Activated CD8-positive, alpha-beta T cell treated with anti-CD3 and anti-CD28 coated beads, Interleukin-2, amount 10 ng/mL, durations not matched to agents 7 days and 5 days (primary cell): ENCODE measurements at regions of chr1 and their contacts with region 1.

Region 1: GRCh38 chr1:147890177-147890790 is 12.3 kb upstream of the GJA8 start:
- DNase-seq: peak; percentile 75
- ATAC-seq: peak; percentile 95
- H3K4me3 Mint-ChIP-seq: no peak overlapping the region
- H3K27ac Mint-ChIP-seq: no peak overlapping the region
- H3K4me1 Mint-ChIP-seq: peaks cover 4% of the 10 kb centered on the region
- H3K27me3 Mint-ChIP-seq: peaks cover 12% of the 10 kb centered on the region

Region 2: DNA sequence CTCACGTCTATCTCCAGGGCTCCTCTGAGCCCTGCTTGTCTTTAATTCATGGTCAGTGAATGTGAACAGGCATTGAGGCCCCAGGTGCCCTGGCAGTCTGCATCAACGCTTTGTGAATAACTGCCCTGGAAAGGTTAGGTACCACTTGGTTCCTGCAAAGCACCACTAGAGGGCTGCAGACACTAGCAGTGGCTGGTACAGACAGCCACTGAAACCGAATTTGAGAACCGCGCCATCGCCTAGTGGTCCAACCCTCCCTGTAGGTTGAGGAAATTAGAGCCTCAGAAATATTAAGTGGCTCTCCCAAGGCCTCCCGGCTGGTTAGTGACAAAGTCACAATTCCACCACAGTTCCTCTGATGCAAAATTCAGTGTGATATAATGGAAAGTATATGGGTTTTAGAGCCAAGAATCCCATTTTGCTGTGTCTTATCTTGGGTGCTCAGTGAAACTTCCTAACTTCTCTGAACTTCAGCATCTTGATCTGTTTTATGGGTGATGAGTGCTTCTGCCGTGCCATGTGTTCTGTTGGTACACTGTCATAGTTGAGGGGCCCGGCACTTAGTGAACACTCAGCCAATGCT is 395.2 kb before region 1 on chr1:
- CTCF ChIA-PET with region 1: interaction called, 47 read pairs
- POLR2A ChIA-PET with region 1: no interaction called
- DNase-seq: peak; percentile 83
- ATAC-seq: peak; percentile 99
- H3K4me3 Mint-ChIP-seq: no peak overlapping the region
- H3K27ac Mint-ChIP-seq: no peak overlapping the region
- H3K4me1 Mint-ChIP-seq: peaks cover 7% of the 10 kb centered on the region
- H3K27me3 Mint-ChIP-seq: peaks cover 5% of the 10 kb centered on the region

Region 3: DNA sequence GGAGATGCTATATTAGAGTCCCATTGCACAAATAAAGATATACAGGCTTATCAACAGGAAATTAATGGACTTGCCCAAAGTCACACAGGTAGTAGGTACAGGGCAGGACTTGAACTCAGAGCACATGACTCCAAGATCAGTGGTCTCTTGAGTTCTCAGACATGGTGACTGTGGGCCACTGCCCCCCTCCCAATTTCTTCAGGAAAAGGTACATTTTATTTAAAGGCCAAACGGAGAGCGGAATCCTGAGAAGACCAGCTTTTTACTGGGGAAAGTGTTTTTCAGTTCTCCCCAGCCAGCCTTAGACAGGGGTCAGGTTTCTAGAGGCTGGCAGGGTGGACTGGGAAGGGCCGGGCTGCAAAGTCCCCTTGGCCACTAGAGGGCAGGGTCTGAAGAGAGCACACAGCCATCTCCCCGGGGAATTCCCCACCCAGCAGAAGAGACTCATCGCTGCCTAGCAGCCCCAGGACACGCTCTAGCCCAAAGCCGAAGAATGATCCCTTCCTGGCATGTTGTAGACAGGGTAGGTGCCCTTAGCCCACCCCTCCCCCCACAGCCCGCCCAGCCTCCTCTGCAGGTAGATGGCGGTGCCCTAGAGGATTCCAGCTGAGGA is 249.6 kb before region 1 on chr1:
- CTCF ChIA-PET with region 1: interaction called, 15 read pairs
- POLR2A ChIA-PET with region 1: no interaction called
- DNase-seq: peak; percentile 85
- ATAC-seq: peak; percentile 98
- H3K4me3 Mint-ChIP-seq: no peak overlapping the region
- H3K27ac Mint-ChIP-seq: no peak overlapping the region
- H3K4me1 Mint-ChIP-seq: peaks cover 46% of the 10 kb centered on the region
- H3K27me3 Mint-ChIP-seq: no peaks in the 10 kb centered on the region

Region 4: DNA sequence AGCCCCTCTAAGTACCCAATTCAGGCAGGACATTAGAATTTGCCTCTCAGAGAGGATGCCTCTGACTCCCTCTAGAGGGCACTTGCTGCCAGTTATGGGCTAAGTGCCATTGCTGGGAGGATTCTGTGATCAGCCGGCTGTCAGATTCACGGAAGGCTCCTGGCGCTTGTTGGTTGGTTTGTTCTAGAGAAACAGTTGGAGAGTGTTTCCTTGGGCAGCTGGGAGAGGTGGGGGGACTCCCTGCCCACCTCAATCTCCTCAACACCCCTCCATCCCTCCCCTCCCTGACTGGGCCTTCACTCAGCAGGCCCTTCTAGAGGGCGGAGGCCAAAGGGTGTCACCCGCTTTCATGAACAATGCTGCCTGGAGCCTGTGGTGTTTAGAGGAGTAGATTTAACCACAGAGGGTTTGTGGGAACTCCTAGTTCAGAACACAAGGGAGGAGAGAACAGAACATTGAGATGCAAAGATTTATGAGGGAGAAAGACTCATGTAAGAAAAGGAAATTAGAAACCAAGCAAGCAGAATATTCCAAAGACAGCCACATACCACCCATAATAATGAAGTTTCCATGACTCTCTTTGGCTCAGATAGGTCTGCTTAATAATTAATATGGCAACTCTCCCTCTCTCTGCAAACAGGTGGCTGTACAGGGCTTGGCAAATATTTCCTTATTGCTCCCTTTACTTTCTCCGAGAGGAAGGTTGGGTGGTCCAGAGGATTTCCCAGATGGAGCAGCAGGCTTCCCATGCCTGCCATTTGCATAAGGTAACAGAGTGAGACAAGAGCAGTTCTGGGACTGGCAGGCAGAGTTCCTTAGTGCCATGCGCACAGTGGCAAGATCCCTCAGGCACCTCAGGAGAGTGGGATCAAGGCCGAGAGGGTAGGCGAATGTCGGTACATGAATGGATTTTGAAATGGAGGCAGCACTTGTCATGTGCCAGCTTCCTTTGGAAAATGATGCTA is 190.0 kb before region 1 on chr1:
- CTCF ChIA-PET with region 1: interaction called, 16 read pairs
- POLR2A ChIA-PET with region 1: no interaction called
- DNase-seq: peak; percentile 79
- ATAC-seq: peak; percentile 94
- H3K4me3 Mint-ChIP-seq: no peak overlapping the region
- H3K27ac Mint-ChIP-seq: no peak overlapping the region
- H3K4me1 Mint-ChIP-seq: peaks cover 10% of the 10 kb centered on the region
- H3K27me3 Mint-ChIP-seq: peaks cover 38% of the 10 kb centered on the region

Region 5: GRCh38 chr1:147815498-147815897 is 74.8 kb before region 1 on chr1:
- CTCF ChIA-PET with region 1: no interaction called
- POLR2A ChIA-PET with region 1: no interaction called
- DNase-seq: no peak
- ATAC-seq: no peak
- H3K4me3 Mint-ChIP-seq: no peak overlapping the region
- H3K27ac Mint-ChIP-seq: no peak overlapping the region
- H3K4me1 Mint-ChIP-seq: no peaks in the 10 kb centered on the region
- H3K27me3 Mint-ChIP-seq: peaks cover 15% of the 10 kb centered on the region

Region 6: GRCh38 chr1:147902183-147902845 is 12.0 kb after region 1 on chr1 and contains the start of gene GJA8:
- CTCF ChIA-PET with region 1: interaction called, 53 read pairs
- POLR2A ChIA-PET with region 1: no interaction called
- DNase-seq: no peak
- ATAC-seq: no peak
- H3K4me3 Mint-ChIP-seq: no peak within 1 kb of the TSS
- H3K27ac Mint-ChIP-seq: no peak within 1 kb of the TSS
- H3K4me1 Mint-ChIP-seq: peaks cover 10% of the 10 kb centered on the region
- H3K27me3 Mint-ChIP-seq: peaks cover 3% of the 10 kb centered on the region
- total RNA-seq, gene GJA8: not detected